Spleen (tissue), 13 donors: ENCODE measurements at regions of chr20 and their contacts with region 1.

Region 1: GRCh38 chr20:53939572-53940359 is 130.6 kb downstream of the BCAS1 start:
- DNase-seq: peak; percentile 92
- H3K4me3 ChIP-seq: peak overlapping the region in 1 of 8 donors; percentile 49
- H3K27ac ChIP-seq: peak overlapping the region in 7 of 8 donors; percentile 57 to 75 (median 61)
- H3K4me1 ChIP-seq: peaks cover 41 to 97% (median 76%) of the 10 kb centered on the region in 6 donors
- H3K27me3 ChIP-seq: no peaks in the 10 kb centered on the region
- CTCF ChIP-seq: peak; percentile 68 to 94 (median 80)
- POLR2A ChIP-seq: no peak

Region 2: DNA sequence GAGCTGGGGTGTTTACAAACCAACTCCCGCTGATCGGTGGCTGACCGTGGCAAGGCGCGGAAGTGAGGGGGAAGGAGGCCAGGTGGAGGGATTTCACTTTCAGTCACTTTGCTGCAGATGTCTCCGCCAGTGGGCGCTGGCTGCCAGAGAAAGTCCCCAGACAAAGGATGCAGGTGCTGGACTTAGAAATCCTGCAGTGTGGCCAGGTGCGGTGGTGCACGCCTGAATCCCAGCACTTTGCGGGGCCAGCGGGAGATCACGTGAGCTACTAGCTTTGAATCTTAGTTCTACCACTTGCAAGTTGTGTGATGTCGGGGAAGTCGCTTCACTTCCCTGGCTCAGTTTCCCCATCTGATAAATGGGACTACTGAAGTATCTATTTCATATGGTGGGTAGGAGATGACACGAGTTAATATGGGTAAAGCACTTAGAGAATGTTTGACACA is 526.6 kb before region 1 on chr20:
- intact Hi-C with region 1: loop called (anchors 10 kb)
- DNase-seq: peak; percentile 87
- H3K4me3 ChIP-seq: peak overlapping the region in 2 of 8 donors; percentile 7 to 40
- H3K27ac ChIP-seq: no peak overlapping the region
- H3K4me1 ChIP-seq: peaks cover 0 to 15% (median 1%) of the 10 kb centered on the region in 6 donors
- H3K27me3 ChIP-seq: no peaks in the 10 kb centered on the region
- CTCF ChIP-seq: peak; percentile 22 to 67 (median 61)
- POLR2A ChIP-seq: no peak

Region 3: DNA sequence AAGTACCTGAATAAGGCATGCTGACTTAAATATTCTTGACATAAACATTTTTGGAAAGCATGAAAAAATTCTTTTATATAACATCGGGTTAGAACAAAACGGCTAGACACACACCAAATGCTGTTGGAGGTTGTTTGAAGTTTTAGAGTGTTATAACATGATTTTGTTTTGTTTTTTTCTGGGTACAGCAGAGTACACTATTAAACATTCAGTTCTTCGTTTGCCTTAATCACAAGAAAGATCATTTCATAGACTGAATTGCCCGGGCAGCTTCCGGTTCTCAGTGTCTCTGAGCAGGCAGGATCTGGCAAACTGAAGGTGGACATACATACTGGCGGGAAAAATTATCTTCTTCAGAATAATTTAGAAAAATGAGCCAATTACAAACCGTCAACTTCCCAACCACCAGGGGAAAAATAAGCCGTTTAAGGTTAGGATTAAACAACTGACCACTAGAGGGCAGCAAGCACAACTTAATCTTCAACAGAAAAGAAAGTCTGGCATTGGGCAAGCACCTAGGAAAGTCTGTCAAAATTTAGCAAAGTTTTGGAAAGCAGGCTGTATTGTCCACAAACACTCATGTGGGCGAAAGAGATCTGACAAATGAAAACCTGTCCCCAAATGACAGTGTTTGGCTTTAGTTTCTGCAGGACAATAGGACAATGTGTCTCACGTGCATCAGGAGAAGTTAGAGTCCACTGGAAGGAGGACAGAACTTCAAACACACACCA is 361.1 kb before region 1 on chr20:
- intact Hi-C with region 1: loop called (anchors 5 kb)
- DNase-seq: no peak
- H3K4me3 ChIP-seq: peak overlapping the region in 7 of 8 donors; percentile 28 to 66 (median 31)
- H3K27ac ChIP-seq: peak overlapping the region; percentile 74 to 100 (median 99)
- H3K4me1 ChIP-seq: peaks cover 65 to 100% (median 92%) of the 10 kb centered on the region in 6 donors
- H3K27me3 ChIP-seq: no peaks in the 10 kb centered on the region
- CTCF ChIP-seq: peak; percentile 69 to 98 (median 89)
- POLR2A ChIP-seq: no peak

Region 4: GRCh38 chr20:54115151-54115854 is 175.5 kb after region 1 on chr20:
- intact Hi-C with region 1: no loop called
- DNase-seq: no peak
- H3K4me3 ChIP-seq: no peak overlapping the region
- H3K27ac ChIP-seq: no peak overlapping the region
- H3K4me1 ChIP-seq: peaks cover 0 to 10% (median 0%) of the 10 kb centered on the region in 6 donors
- H3K27me3 ChIP-seq: no peaks in the 10 kb centered on the region
- CTCF ChIP-seq: no peak
- POLR2A ChIP-seq: no peak